Endothelial cell of umbilical vein (primary cell): ENCODE measurements at regions of chr22 and their contacts with region 1.

Region 1: DNA sequence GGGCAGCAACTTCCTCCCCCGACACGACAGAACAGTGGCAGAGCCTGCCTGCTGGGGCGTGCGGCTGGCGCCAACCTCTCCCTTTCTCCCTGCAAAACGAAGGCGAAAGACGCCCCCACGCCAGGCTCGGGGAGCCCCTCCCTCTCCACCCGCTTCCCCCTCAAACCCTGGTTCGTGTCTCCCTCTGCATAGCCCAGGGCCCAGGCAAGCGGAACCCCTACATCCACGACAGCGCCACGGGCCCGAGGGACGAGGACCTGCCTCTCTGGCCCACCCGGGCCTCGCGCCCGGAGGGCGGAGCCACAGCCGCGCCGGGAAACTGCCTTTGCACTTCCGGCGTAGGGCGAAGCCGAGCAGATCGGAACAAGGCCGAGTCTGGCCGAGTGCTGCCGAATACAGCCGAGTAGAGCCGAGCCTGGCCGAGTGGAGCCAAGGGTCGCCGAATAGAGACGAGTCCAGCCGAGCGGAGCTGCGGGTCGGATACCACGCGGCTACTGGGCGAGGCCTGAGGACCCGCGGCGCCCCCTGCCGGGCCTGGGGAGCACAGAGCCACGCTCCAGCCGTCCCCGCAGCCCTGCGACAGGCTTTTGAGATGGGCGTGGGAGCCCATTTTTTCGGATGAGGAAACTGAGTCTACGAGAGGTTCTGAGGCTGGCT is 11.2 kb upstream of the C1QTNF6 start:
- DNase-seq: peak; percentile 99
- H3K4me3 ChIP-seq: peak overlapping the region; percentile 39 to 56 (median 52)
- H3K27ac ChIP-seq: peak overlapping the region; percentile 71
- H3K4me1 ChIP-seq: peaks cover 28% of the 10 kb centered on the region
- H3K27me3 ChIP-seq: no peaks in the 10 kb centered on the region
- CTCF ChIP-seq: peak; percentile 99
- POLR2A ChIP-seq: peak; percentile 95

Region 2: DNA sequence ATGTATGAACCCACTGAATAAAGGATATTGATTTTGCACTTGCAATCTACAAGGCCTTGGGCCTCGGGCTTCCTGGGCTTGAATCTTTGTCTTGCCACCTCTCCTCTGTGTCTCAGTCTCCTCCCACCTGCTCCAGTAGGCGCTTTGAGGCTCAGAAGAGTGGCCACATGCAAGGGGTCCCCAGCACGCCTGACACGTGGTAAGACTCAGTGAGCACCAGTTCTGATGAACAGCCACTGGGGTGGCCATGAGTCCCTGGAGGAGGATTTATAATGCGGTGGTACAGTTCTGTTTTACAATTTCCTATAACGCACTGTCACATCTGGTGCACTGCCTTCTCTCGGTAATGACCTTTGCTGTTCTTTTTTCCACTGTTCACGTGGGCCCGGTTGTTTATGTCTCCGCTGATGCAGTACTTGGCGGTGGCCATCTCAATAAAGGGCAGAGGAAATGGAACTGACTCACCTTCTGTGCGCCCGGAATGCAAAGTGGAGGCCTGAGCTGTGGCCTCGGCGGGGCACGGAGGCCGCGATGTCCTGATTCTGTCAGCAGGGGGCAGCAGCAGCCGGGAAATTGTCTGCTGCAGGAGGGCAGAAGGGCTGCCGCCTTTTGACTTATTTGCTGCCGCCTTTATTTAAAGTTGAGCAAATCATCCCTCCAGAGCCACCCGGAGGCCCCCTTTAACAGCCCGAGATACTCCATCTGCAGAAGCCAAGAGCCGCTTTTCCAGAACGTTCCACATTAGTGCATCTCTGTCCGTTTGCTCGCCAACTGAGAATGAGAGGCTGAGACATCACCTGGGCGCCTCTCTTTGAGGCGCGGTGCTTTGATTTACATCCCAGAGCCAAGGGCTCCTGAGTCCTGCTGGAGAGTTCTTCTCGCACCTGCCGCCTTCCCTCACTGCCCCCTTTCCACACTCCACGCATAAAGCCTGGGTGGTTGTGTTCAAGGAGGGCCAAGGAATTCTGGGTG is 417.3 kb before region 1 on chr22:
- CTCF ChIA-PET with region 1: no interaction called
- POLR2A ChIA-PET with region 1: no interaction called
- dilution Hi-C with region 1: no loop called
- intact Hi-C with region 1: loop called (anchors 1 kb)
- DNase-seq: peak; percentile 95
- H3K4me3 ChIP-seq: no peak overlapping the region
- H3K27ac ChIP-seq: peak overlapping the region; percentile 62
- H3K4me1 ChIP-seq: peaks cover 4% of the 10 kb centered on the region
- H3K27me3 ChIP-seq: peaks cover 3 to 8% of the 10 kb centered on the region in 2 experiments
- CTCF ChIP-seq: peak; percentile 93 to 98
- POLR2A ChIP-seq: no peak

Region 3: GRCh38 chr22:36846949-36847348 is 352.3 kb before region 1 on chr22:
- CTCF ChIA-PET with region 1: no interaction called
- POLR2A ChIA-PET with region 1: no interaction called
- dilution Hi-C with region 1: no loop called
- intact Hi-C with region 1: no loop called
- DNase-seq: no peak
- H3K4me3 ChIP-seq: no peak overlapping the region
- H3K27ac ChIP-seq: no peak overlapping the region
- H3K4me1 ChIP-seq: no peaks in the 10 kb centered on the region
- H3K27me3 ChIP-seq: peaks cover 11 to 12% of the 10 kb centered on the region in 2 experiments
- CTCF ChIP-seq: no peak
- POLR2A ChIP-seq: no peak

Region 4: GRCh38 chr22:36891646-36892045 is 307.6 kb before region 1 on chr22:
- CTCF ChIA-PET with region 1: no interaction called
- POLR2A ChIA-PET with region 1: no interaction called
- dilution Hi-C with region 1: no loop called
- intact Hi-C with region 1: no loop called
- DNase-seq: no peak
- H3K4me3 ChIP-seq: no peak overlapping the region
- H3K27ac ChIP-seq: no peak overlapping the region
- H3K4me1 ChIP-seq: peaks cover 19% of the 10 kb centered on the region
- H3K27me3 ChIP-seq: no peaks in the 10 kb centered on the region
- CTCF ChIP-seq: no peak
- POLR2A ChIP-seq: no peak

Region 5: GRCh38 chr22:37077884-37078485 is 121.2 kb before region 1 on chr22:
- CTCF ChIA-PET with region 1: interaction called, 45 read pairs
- POLR2A ChIA-PET with region 1: no interaction called
- dilution Hi-C with region 1: no loop called
- intact Hi-C with region 1: loop called (anchors 1 kb)
- DNase-seq: peak; percentile 38
- H3K4me3 ChIP-seq: no peak overlapping the region
- H3K27ac ChIP-seq: no peak overlapping the region
- H3K4me1 ChIP-seq: peaks cover 9% of the 10 kb centered on the region
- H3K27me3 ChIP-seq: peaks cover 0 to 6% of the 10 kb centered on the region in 2 experiments
- CTCF ChIP-seq: peak; percentile 98 to 99
- POLR2A ChIP-seq: no peak

Region 6: DNA sequence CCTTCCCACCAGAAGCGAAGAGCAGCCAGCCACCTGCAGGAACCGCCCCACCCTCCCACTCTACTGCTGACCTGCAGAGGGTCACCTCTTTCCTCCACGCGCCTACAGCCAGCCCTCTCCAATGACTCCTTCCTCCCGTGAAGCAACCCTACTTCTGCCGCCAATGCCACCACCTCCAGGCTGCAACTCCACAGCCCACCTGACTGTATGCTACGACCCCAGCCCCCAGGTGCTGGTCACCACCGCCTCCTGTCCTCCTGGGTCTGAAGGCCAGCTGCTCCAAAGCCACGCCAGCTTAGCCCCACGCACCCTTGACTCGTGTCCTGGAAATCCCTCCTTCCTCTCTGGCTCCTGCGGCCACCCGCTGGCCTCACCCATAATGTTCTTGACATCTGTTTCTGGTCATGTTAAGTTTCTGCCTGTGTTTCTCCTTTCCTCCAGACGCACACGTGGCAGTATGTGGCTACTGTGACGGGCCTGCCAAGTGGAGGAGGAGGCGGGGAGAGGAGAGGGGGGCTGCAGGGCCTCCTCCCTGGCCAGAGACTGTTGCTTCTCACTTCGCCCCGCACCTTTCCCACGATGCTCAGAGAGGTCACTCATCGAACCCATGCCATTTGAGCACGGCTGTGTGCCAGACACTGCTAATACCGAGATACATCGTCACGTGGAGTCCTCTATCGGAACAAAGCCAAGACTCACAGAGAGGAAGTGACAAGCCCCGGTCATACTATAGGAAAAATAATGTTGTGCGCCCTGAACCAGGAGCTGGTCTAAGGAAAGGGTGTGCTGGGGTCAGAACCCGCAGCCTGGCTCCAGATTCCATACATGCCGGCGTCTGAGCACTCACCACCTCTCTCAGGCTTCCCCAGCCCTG is 22.8 kb before region 1 on chr22:
- CTCF ChIA-PET with region 1: interaction called, 54 read pairs
- POLR2A ChIA-PET with region 1: no interaction called
- dilution Hi-C with region 1: no loop called
- intact Hi-C with region 1: no loop called
- DNase-seq: peak; percentile 96
- H3K4me3 ChIP-seq: peak overlapping the region in 1 of 3 experiments; percentile 2
- H3K27ac ChIP-seq: peak overlapping the region; percentile 82
- H3K4me1 ChIP-seq: peaks cover 30% of the 10 kb centered on the region
- H3K27me3 ChIP-seq: no peaks in the 10 kb centered on the region
- CTCF ChIP-seq: no peak
- POLR2A ChIP-seq: no peak

Region 7: DNA sequence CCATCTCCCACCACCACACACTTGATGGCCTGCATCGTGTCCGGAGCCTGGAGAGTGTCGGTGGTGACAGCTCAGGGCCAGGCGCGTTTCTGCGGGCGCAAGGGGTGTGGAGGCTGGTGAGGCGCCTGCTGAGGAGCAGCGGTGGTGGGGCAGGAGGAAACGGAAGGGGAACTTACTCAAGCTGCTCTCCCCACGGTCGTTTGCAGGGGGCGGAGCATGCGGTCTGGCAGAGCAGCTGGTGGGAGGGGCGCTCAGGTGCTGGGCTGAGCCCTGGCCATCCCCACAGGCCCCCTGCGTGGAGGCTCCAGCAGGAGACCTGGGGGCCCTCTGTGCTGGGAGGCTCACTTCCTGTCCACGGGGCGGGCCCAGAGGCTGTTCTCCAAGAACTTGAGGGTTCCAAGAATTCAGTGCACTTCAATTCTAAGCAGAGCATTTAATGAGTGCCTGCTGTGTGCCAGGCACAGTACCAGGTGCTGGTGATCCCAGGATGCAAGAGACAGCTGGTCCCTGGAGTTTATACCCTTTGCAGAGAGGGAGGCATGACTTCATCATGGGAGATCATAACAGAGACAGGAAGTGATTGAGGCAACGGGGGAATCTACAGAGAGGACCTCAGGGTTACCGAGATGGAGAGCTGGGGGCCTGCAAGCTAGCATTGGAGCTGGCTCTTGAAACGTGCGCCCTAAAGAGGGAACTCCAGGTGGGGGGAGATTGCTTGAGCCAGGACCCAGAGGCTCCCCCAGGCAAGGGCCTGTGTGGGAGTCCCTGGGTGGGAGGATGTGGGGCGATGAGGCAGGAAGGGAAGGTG is 45.1 kb after region 1 on chr22 and contains the start of gene RAC2:
- CTCF ChIA-PET with region 1: interaction called, 12 read pairs
- POLR2A ChIA-PET with region 1: no interaction called
- dilution Hi-C with region 1: no loop called
- intact Hi-C with region 1: no loop called
- DNase-seq: peak; percentile 69
- H3K4me3 ChIP-seq: peak within 1 kb of the TSS; percentile 39 to 59 (median 50)
- H3K27ac ChIP-seq: peak within 1 kb of the TSS; percentile 28
- H3K4me1 ChIP-seq: peaks cover 34% of the 10 kb centered on the region
- H3K27me3 ChIP-seq: no peaks in the 10 kb centered on the region
- CTCF ChIP-seq: no peak
- POLR2A ChIP-seq: peak; percentile 84
- total RNA-seq, gene RAC2: 111 and 122 TPM in 2 replicates

Region 8: GRCh38 chr22:37260901-37261336 is 61.7 kb after region 1 on chr22:
- CTCF ChIA-PET with region 1: interaction called, 42 read pairs
- POLR2A ChIA-PET with region 1: no interaction called
- dilution Hi-C with region 1: no loop called
- intact Hi-C with region 1: loop called (anchors 2 kb)
- DNase-seq: peak; percentile 55
- H3K4me3 ChIP-seq: no peak overlapping the region
- H3K27ac ChIP-seq: no peak overlapping the region
- H3K4me1 ChIP-seq: peaks cover 9% of the 10 kb centered on the region
- H3K27me3 ChIP-seq: no peaks in the 10 kb centered on the region
- CTCF ChIP-seq: peak; percentile 91 to 92
- POLR2A ChIP-seq: no peak

Region 9: DNA sequence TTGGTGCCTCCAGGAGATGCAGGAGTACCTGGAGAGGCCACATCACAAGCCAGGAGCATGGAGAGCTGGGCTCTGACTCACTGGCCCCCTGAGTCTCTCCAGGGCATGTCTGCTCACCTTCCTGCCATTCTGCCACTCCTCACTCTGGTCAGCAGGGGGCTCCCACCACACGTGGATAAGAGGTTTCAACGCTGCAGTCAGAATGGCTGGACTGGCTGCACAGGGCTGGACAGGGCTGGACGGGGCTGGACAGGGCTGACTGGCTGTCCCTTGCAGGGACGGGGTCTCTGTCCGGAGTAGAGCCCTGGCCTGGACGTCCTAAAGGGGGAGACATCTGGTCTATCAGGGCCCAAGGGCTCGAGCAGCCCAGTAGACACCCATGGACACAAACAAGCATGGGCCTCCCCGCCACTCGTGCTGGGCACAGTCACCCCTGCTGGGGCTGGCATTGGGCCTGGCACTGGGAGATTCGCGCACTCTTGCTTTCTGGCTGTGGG is 117.7 kb after region 1 on chr22:
- CTCF ChIA-PET with region 1: no interaction called
- POLR2A ChIA-PET with region 1: no interaction called
- dilution Hi-C with region 1: no loop called
- intact Hi-C with region 1: no loop called
- DNase-seq: peak; percentile 82
- H3K4me3 ChIP-seq: no peak overlapping the region
- H3K27ac ChIP-seq: no peak overlapping the region
- H3K4me1 ChIP-seq: peaks cover 6% of the 10 kb centered on the region
- H3K27me3 ChIP-seq: no peaks in the 10 kb centered on the region
- CTCF ChIP-seq: peak; percentile 93
- POLR2A ChIP-seq: no peak